GM18951 (cell line): ENCODE measurements at regions of chr1 and their contacts with region 1.

Region 1: DNA sequence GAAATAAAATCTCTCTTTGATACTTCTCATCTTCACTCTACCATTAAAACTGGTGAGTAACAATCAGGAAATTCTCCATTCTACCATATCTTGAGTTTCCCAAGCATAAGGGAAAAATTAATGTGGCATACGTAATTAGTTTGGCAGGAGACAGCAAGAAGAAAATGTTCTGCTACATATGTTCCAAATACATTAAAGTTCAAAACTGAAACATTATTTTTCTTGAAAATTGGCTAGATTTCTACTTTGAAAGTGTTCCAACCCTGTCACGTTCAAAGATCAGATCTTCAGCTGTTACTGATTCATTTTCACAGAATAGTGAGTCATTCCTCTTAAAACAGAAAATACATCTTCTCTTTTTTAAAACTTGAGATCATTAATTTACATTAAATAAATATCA is 48.5 kb downstream of the PIGK start:
- POLR2A ChIP-seq: no peak

Region 2: GRCh38 chr1:76901158-76901767 is 269.4 kb before region 1 on chr1:
- in situ Hi-C with region 1: no loop called
- POLR2A ChIP-seq: no peak

Region 3: DNA sequence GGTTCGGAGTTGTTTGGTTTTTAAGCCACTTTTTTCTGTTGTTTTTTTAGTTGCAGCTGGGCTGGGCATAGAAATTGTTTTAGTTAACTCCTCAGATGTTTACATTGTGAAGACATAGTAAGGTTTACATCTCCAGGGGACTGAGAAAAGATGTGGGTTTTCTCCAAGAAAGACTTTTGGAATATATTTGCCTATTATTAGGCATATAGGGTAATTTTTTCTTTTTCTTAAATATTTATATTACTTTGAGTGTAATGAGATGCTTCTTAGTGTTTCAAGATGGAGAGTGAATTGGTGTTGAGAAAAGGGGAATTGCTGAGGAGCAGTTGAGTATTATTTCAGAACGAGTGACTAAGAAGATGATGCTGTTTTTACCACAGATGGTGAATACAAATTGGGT is 75.1 kb after region 1 on chr1:
- in situ Hi-C with region 1: no loop called
- POLR2A ChIP-seq: no peak

Region 4: DNA sequence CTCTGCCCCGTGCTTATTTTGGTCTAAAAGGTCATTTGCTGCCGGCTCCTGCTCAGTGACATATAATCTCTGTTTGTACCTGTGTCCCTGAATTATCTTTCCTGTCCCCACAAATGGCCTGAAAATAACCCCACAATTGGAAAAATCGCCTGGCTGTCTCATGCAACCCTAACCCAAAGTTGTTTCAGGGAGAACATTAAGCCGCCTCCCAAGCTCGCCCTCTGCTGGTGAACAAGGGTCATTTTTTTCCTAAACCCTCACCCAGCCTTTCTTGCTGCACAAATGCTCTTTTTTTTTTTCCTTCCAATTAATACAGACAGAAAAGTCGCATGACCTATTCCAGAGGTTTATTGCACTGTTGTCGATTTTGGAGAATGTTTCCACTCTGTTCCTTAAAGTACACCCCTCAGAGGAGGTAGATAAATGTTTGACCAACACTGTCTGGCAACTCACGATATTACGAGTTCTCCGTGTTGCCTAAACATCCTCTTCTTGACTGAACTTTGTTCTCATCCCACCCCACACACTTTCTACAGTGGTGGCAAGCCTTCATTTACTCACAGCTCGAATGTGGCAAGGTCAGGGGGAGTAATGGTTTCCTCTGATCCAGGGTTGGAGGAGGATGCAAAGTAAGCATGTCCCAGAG is 363.1 kb after region 1 on chr1:
- in situ Hi-C with region 1: loop called (anchors 25 kb)
- POLR2A ChIP-seq: no peak

Region 5: GRCh38 chr1:78114034-78114956 is 943.6 kb after region 1 on chr1:
- in situ Hi-C with region 1: loop called (anchors 25 kb)
- POLR2A ChIP-seq: no peak